A673 (cell line): ENCODE measurements at regions of chr2 and their contacts with region 1.

Region 1: DNA sequence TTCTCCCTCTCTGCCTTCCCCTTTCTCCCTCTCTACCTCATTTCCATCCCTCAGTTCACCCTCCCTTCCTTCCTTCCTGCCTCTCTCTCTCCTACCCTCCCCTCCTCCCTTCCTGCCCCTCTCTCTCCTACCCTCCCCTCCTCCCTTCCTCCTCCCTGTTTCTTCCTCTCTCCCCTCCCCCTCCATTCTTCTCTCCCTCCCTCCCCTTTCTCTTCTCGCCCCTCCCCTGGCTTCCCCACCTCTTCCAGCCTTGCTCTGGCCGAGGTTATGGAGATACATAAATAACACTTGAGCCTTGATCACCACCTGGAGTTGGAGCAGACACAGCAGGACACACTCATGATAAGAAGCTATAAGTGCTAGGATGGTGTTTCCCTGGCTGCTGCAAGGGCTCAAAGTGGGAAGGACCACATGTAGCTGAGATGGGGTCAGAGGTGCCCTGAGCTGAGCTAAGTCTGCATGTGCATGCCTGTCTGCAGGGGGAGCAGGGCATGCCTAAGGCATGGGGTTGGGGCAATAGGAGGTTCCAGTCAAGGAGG is 326.1 kb upstream of the HS6ST1 start:
- DNase-seq: no peak
- H3K4me3 ChIP-seq: no peak overlapping the region
- H3K27ac ChIP-seq: no peak overlapping the region
- H3K4me1 ChIP-seq: peaks cover 2% of the 10 kb centered on the region
- H3K27me3 ChIP-seq: no peaks in the 10 kb centered on the region
- CTCF ChIP-seq: no peak

Region 2: DNA sequence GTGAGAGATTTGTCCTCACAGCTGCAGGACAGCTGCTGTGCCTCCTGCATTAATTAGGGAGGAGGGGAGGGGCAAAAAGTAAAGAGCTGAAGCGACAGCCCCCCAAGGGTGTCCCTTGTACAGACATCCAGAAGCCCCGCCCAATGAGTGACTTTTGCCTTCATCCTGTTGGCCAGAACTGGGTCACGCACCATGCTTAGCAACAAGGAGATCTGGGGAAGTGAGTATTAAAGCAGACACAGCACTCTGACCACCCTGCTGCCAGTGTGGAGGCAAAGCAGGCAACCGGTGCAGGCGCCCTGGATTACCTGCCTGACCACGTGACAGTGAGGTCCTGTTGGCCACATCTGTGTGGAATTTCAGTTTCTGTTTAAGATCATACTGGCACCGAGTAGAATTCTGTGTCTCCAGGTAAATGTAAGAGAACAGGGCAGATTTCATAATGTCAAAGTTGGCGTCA is 1516.3 kb before region 1 on chr2:
- CTCF ChIA-PET with region 1: no interaction called
- POLR2A ChIA-PET with region 1: interaction called, 16 read pairs
- intact Hi-C with region 1: no loop called
- DNase-seq: peak; percentile 49
- H3K4me3 ChIP-seq: no peak overlapping the region
- H3K27ac ChIP-seq: no peak overlapping the region
- H3K4me1 ChIP-seq: no peaks in the 10 kb centered on the region
- H3K27me3 ChIP-seq: no peaks in the 10 kb centered on the region
- CTCF ChIP-seq: no peak

Region 3: DNA sequence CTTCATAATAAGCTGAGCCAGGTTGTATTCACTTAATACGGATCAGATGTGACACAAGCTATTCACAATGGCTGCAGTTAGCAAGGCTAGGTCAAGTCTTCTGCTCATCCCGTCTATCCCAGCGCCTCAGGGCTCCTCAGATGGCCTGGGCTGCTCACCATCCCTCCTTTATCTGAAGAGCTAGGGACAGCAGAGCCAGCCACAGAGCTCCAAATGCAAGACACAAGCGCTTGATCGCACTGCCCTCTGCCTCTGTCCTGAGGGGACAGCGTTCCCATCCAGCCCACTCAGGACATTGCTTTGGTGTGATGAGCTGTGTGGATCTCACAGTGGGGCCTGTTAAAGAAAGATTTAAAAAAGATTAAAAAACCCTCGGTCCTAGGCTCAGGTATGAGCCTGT is 71.7 kb before region 1 on chr2:
- CTCF ChIA-PET with region 1: interaction called, 11 read pairs
- POLR2A ChIA-PET with region 1: no interaction called
- intact Hi-C with region 1: no loop called
- DNase-seq: no peak
- H3K4me3 ChIP-seq: no peak overlapping the region
- H3K27ac ChIP-seq: no peak overlapping the region
- H3K4me1 ChIP-seq: no peaks in the 10 kb centered on the region
- H3K27me3 ChIP-seq: no peaks in the 10 kb centered on the region
- CTCF ChIP-seq: no peak